ENCODE measurements at regions of chr17 and their contacts with region 1.

Region 1: DNA sequence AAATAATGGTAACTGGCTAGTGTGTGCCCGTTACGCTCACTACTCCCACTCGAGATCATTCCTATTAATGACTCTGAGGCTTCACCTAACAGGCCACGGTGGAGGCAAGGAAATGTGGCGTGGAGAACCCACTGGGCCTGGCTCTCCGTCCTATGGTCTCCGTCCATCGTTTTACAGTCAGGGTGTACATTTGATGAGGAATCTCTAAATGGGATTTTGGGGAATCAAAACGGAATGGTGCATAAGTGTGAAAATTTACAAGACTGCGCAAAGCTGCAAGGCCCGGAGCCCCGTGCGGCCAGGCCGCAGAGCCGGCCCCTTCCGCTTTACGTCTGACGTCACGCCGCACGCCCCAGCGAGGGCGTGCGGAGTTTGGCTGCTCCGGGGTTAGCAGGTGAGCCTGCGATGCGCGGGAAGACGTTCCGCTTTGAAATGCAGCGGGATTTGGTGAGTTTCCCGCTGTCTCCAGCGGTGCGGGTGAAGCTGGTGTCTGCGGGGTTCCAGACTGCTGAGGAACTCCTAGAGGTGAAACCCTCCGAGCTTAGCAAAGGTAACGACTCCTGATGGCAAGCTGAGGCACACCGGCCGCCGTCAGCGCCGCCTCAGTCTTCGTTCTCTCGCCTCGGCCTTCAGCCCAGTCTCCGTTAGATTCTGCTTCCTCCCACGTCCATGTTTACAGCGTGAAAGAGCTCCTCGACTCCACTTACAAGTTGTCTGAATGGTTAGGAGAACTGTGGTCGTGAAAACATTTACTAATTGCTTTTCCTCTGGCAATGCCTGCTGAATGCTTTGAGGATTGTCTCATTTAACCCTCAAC is at the start of gene RAD51C:
- DNase-seq: peak; percentile 74 to 81
- H3K4me3 ChIP-seq: peak within 1 kb of the TSS; percentile 57 to 66
- H3K27ac ChIP-seq: peak within 1 kb of the TSS; percentile 77 to 84
- H3K4me1 ChIP-seq: no peaks in the 10 kb centered on the region
- H3K27me3 ChIP-seq: no peaks in the 10 kb centered on the region
- CTCF ChIP-seq: no peak
- POLR2A ChIP-seq: peak; percentile 28 to 53
- total RNA-seq, gene RAD51C: 1.2 to 32.6 (median 18.8) TPM

Region 2: GRCh38 chr17:58520843-58521430 is 171.5 kb before region 1 on chr17:
- intact Hi-C with region 1: loop called (anchors 10 kb)
- DNase-seq: no peak
- H3K4me3 ChIP-seq: no peak overlapping the region
- H3K27ac ChIP-seq: no peak overlapping the region
- H3K4me1 ChIP-seq: no peaks in the 10 kb centered on the region
- H3K27me3 ChIP-seq: no peaks in the 10 kb centered on the region
- CTCF ChIP-seq: no peak
- POLR2A ChIP-seq: no peak

Region 3: DNA sequence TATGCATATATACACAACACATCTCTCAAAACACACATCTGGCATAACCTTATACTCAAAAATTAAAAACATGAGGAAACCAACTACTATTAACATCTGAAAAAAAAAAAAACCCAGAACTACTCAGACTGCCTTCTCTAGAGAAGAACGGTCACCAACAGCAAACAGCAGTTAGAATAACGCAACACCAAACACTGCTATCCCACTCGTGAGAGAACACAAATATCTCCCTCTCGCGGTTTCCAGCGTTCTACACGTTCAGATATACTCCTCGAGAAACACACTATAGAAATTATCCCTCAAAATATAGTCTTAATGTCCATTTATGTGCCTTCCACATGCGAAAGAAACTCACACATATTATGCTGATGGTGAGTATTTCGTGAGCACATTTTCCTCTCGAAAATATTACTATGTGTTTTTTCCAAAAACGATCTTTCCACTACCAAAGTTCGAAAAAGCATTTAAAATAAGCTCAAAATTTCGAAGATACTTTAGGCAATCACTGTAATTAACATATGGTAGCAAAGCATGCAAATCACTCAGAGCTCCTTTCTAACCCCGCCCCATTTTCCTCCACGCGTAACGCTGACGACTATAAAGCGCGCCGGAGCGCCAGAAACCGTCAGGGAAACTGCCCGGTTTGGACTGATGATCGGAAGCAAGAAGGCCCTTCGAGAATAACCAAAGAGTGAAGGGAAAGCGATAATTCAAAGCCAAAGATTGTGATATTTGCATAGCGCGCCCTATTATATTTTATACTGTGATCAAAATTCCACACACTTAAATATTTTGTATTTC is 60.7 kb before region 1 on chr17:
- intact Hi-C with region 1: no loop called
- DNase-seq: peak; percentile 93 to 95
- H3K4me3 ChIP-seq: peak overlapping the region; percentile 31 to 34
- H3K27ac ChIP-seq: peak overlapping the region; percentile 78 to 88
- H3K4me1 ChIP-seq: no peaks in the 10 kb centered on the region
- H3K27me3 ChIP-seq: no peaks in the 10 kb centered on the region
- CTCF ChIP-seq: peak; percentile 2 to 47 (median 16)
- POLR2A ChIP-seq: peak; percentile 76 to 90

Region 4: GRCh38 chr17:58808645-58809563 is 116.5 kb after region 1 on chr17:
- intact Hi-C with region 1: no loop called
- DNase-seq: no peak
- H3K4me3 ChIP-seq: no peak overlapping the region
- H3K27ac ChIP-seq: no peak overlapping the region
- H3K4me1 ChIP-seq: no peaks in the 10 kb centered on the region
- H3K27me3 ChIP-seq: no peaks in the 10 kb centered on the region
- CTCF ChIP-seq: no peak
- POLR2A ChIP-seq: no peak